ENCODE measurements at regions of chr17 and their contacts with region 1.

Region 1: DNA sequence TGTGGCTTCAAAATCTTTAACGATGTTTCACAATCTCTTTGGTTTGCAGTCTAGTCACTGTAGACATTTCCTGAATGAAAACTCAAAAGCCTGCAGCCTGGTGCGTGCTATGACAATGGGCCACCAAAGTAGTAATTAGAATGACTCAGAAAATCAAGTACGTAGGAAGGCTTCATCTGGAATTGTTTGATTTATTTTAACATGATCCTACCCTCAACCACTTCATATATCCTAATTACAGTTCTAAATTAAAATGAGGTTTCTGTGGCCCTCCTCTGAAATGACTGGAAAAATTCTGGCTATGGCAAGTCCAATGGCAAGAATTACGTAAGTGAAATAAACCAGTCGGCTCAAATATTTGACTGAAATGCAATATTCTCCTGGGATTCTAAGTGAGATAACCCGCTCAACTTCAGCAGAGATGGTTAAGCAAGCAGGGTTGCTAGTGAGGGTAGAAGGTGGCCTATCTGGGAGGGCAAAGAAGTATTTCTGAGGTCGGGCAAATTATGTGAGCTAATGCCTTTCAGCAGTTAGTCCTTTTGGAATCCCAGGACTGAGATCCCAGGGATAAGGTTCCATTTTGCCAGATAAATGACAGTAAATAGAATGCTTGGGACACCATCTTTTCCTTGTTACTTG is 145.6 kb upstream of the MYOCD start:
- DNase-seq: no peak

Region 2: GRCh38 chr17:12463102-12463501 is 57.0 kb before region 1 on chr17:
- intact Hi-C with region 1: loop called in 1 of 2 experiments (anchors 10 kb)
- DNase-seq: no peak

Region 3: GRCh38 chr17:12566291-12566690 is 46.2 kb after region 1 on chr17:
- intact Hi-C with region 1: no loop called
- DNase-seq: no peak